Breast epithelium (tissue), 4 donors: ENCODE measurements at regions of chr17 and their contacts with region 1.

Region 1: GRCh38 chr17:81238817-81239600 is at the starts of genes NDUFAF8 and TEPSIN:
- DNase-seq: peak; percentile 98 to 99
- H3K4me3 ChIP-seq: peak within 1 kb of the TSS; percentile 80 to 100 (median 97)
- H3K27ac ChIP-seq: peak within 1 kb of the TSS; percentile 72 to 74
- H3K4me1 ChIP-seq: peaks cover 0 to 15% of the 10 kb centered on the region in 2 donors
- H3K27me3 ChIP-seq: no peaks in the 10 kb centered on the region
- CTCF ChIP-seq: no peak
- POLR2A ChIP-seq: peak; percentile 37
- total RNA-seq, gene NDUFAF8: 34.2 to 39.7 (median 35.2) TPM
- total RNA-seq, gene TEPSIN: 33.9 to 54.3 (median 36.4) TPM

Region 2: DNA sequence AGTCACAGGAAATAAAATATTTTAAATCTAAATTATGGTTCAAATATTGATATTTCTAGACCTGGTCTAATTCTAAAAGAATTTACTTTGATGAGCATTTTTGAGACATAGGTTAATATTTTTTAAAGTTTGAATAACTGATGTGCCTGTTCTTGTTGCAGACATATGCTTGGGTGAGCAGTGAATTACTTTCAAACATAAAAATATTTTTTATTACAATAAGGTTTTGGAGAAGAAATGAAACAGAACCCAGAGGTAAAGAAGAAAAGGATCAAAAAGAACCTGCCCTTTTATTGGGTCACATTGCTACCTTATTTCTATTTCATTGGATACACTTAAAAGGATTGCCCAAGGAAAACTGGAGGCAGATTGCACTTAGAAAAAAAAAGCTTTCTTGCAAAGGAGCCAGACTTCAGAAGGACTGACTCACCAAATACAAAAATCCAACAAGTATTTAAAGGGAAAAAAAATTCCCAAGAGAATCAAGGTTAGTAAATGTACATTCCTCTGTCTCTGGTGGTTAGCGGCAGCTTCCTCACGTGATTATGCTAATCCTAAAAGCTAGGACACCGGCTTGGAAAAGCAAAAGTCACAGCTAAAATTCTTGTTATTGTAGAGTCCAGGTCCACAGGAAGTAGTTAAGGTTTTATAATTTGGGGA is 1489.7 kb before region 1 on chr17:
- intact Hi-C with region 1: no loop called
- DNase-seq: no peak
- H3K4me3 ChIP-seq: no peak overlapping the region
- H3K27ac ChIP-seq: no peak overlapping the region
- H3K4me1 ChIP-seq: no peaks in the 10 kb centered on the region
- H3K27me3 ChIP-seq: peaks cover 10 to 66% of the 10 kb centered on the region in 2 donors
- CTCF ChIP-seq: no peak
- POLR2A ChIP-seq: no peak

Region 3: DNA sequence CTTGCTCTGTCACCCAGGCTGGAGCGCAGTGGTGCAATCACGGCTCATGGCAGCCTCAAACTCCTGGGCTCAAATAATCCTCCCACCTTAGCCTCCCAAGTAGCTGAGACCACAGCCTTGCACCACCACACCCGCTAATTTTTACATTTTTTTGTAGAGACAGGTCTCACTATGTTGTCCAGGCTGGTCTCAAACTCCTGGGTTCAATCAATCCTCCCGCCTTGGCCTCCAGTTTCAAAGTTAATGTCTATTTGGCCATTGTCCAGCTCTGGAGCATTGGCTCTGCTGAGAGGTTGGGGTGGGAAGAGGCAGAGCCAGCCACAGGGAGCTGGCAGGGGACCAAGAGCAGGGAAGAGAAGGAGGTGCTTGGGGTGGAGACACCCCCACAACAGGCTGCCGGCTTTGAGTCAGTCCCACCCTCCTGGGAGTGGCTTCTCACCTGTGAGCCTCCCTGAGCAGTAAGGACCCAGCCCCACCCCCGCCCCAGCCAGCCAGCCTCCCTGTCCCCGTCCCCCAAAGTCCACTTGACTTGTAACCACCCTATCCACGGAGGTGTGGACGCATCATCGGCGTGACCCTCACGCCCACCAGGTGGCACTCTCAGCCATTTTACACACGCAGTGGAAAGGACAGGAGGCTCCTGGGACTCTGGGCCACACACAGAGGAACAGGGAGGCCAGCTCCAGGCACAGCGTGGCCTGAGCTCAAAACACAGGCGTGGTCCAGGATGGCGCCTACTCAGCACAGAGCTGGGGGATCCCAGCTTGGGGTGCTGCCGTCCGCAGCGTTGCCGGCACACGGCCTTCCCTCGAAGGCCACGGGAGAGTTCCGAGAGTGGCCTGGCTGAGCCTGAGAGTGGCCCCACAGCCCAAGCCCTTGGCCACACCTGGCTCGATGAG is 96.5 kb before region 1 on chr17:
- intact Hi-C with region 1: loop called (anchors 5 kb)
- DNase-seq: peak; percentile 78 to 82
- H3K4me3 ChIP-seq: peak overlapping the region in 1 of 3 donors; percentile 37
- H3K27ac ChIP-seq: no peak overlapping the region
- H3K4me1 ChIP-seq: no peaks in the 10 kb centered on the region
- H3K27me3 ChIP-seq: no peaks in the 10 kb centered on the region
- CTCF ChIP-seq: peak; percentile 20 to 66 (median 38)
- POLR2A ChIP-seq: no peak

Region 4: GRCh38 chr17:81222906-81223761 is 15.9 kb before region 1 on chr17 and contains the start of gene CEP131:
- intact Hi-C with region 1: no loop called
- DNase-seq: peak; percentile 99
- H3K4me3 ChIP-seq: peak within 1 kb of the TSS; percentile 76 to 98 (median 84)
- H3K27ac ChIP-seq: peak within 1 kb of the TSS; percentile 66 to 77
- H3K4me1 ChIP-seq: peaks cover 8% of the 10 kb centered on the region in 2 donors
- H3K27me3 ChIP-seq: no peaks in the 10 kb centered on the region
- CTCF ChIP-seq: no peak
- POLR2A ChIP-seq: no peak
- total RNA-seq, gene CEP131: 6.9 to 12.8 (median 9.7) TPM